ENCODE measurements at regions of chr6 and their contacts with region 1.

Region 1: GRCh38 chr6:149723771-149724417 is 6.0 kb upstream of the LATS1 start:
- DNase-seq: peak in 7 of 9 donors; percentile 29 to 50 (median 43)
- ATAC-seq: peak; percentile 93
- H3K4me3 ChIP-seq: no peak overlapping the region
- H3K4me3 Mint-ChIP-seq: no peak overlapping the region
- H3K27ac ChIP-seq: no peak overlapping the region
- H3K27ac Mint-ChIP-seq: peak overlapping the region in 4 of 9 donors; percentile 10 to 78 (median 34)
- H3K4me1 ChIP-seq: peaks cover 3 to 13% of the 10 kb centered on the region in 2 donors
- H3K4me1 Mint-ChIP-seq: peaks cover 16 to 30% (median 24%) of the 10 kb centered on the region in 7 donors
- H3K27me3 ChIP-seq: no peaks in the 10 kb centered on the region
- H3K27me3 Mint-ChIP-seq: no peaks in the 10 kb centered on the region

Region 2: DNA sequence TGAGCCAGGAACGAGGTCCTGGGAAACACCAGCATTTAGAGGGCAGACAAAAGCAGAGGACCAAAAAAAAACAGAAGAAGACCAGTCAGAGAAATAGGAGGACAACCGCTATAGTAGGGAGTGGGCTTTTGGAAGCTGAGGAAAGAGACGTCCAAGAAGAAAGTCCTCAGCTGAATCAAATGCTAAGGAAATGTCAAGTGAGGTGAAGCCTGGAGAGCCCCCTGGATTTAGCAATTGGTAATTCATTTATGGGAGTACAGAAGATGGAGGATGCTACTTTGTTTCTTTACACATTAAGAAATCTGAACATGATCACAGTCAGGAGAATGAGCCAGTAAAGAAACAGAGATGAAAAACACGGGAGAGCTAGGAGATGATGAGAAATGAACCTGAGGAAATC is 99.1 kb after region 1 on chr6:
- CTCF ChIA-PET with region 1: interaction called, 4 read pairs
- POLR2A ChIA-PET with region 1: no interaction called
- intact Hi-C with region 1: loop called in 1 of 2 experiments (anchors 1 kb)
- DNase-seq: no peak
- ATAC-seq: no peak
- H3K4me3 ChIP-seq: no peak overlapping the region
- H3K4me3 Mint-ChIP-seq: no peak overlapping the region
- H3K27ac ChIP-seq: no peak overlapping the region
- H3K27ac Mint-ChIP-seq: no peak overlapping the region
- H3K4me1 ChIP-seq: no peaks in the 10 kb centered on the region
- H3K4me1 Mint-ChIP-seq: no peaks in the 10 kb centered on the region
- H3K27me3 ChIP-seq: no peaks in the 10 kb centered on the region
- H3K27me3 Mint-ChIP-seq: peaks cover 0 to 6% (median 0%) of the 10 kb centered on the region in 5 donors

Region 3: DNA sequence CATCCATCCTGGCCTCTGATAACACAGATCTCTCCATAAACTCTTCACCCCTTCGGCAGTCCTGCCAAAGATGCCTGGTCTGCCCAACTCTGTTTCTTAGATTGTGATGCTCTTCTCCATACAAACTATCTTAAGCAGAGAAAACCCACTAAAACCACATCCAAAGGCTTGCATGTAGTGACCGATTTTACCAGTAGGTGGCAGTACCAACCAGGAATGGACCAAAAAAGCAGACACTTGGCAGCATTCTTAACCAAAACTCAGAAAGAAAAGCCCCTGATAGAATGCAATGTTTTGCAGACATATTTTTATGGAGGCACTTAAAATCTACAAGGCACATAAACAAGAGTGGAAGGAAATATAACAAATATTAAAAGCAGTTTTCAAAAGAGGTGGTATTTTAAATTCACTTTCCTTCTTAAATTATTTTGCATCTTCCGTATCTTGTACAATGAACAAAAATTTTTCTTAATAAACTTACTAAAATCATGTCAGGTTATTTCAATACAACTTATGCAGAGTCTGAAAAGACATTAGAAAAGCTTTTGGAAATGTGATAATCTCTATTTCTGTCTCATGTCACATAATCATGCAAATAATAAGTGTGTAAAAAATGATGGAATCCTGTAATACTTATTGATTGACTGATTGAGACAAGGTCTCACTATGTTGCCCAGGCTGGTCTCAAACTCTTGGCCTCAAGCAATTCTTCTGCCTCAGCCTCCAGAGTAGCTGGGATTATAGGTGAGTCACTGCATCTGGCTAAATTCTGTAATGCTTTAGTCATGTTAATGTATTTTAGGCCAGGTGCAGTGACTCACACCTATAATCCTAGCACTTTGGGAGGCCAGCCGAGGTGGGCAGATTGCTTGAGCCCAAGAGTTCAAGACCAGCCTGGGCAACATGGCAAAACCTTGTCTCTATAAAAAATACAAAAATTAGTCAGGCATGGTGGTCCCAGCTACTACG is 110.9 kb after region 1 on chr6:
- CTCF ChIA-PET with region 1: no interaction called
- POLR2A ChIA-PET with region 1: no interaction called
- intact Hi-C with region 1: loop called in 1 of 2 experiments (anchors 1 kb)
- DNase-seq: peak; percentile 50 to 85 (median 75)
- ATAC-seq: peak; percentile 92
- H3K4me3 ChIP-seq: no peak overlapping the region
- H3K4me3 Mint-ChIP-seq: no peak overlapping the region
- H3K27ac ChIP-seq: no peak overlapping the region
- H3K27ac Mint-ChIP-seq: no peak overlapping the region
- H3K4me1 ChIP-seq: no peaks in the 10 kb centered on the region
- H3K4me1 Mint-ChIP-seq: peaks cover 0 to 5% (median 4%) of the 10 kb centered on the region in 7 donors
- H3K27me3 ChIP-seq: no peaks in the 10 kb centered on the region
- H3K27me3 Mint-ChIP-seq: peaks cover 0 to 19% (median 4%) of the 10 kb centered on the region in 5 donors

Region 4: GRCh38 chr6:150016324-150017185 is 292.7 kb after region 1 on chr6:
- CTCF ChIA-PET with region 1: no interaction called
- POLR2A ChIA-PET with region 1: no interaction called
- intact Hi-C with region 1: loop called in 1 of 2 experiments (anchors 2 kb)
- DNase-seq: peak in 8 of 9 donors; percentile 38 to 77 (median 68)
- ATAC-seq: peak; percentile 85
- H3K4me3 ChIP-seq: no peak overlapping the region
- H3K4me3 Mint-ChIP-seq: no peak overlapping the region
- H3K27ac ChIP-seq: no peak overlapping the region
- H3K27ac Mint-ChIP-seq: peak overlapping the region in 1 of 9 donors; percentile 1
- H3K4me1 ChIP-seq: peaks cover 0 to 2% of the 10 kb centered on the region in 2 donors
- H3K4me1 Mint-ChIP-seq: peaks cover 10 to 23% (median 15%) of the 10 kb centered on the region in 7 donors
- H3K27me3 ChIP-seq: peaks cover 11 to 16% of the 10 kb centered on the region in 2 donors
- H3K27me3 Mint-ChIP-seq: peaks cover 60 to 80% (median 66%) of the 10 kb centered on the region in 5 donors